ENCODE measurements at regions of chr2 and their contacts with region 1.

Region 1: GRCh38 chr2:64839844-64840243 is 149.4 kb upstream of the SLC1A4 start:
- DNase-seq: no peak
- ATAC-seq: no peak
- H3K4me3 ChIP-seq: no peak overlapping the region
- H3K27ac ChIP-seq: peak overlapping the region; percentile 86; the same call in 1 of the 2 replicates
- H3K4me1 ChIP-seq: peaks cover 57% of the 10 kb centered on the region
- H3K27me3 ChIP-seq: no peaks in the 10 kb centered on the region
- CTCF ChIP-seq: no peak

Region 2: GRCh38 chr2:64128943-64129391 is 710.9 kb before region 1 on chr2:
- CTCF ChIA-PET with region 1: no interaction called
- POLR2A ChIA-PET with region 1: interaction called, 14 read pairs
- intact Hi-C with region 1: no loop called
- DNase-seq: no peak
- ATAC-seq: no peak
- H3K4me3 ChIP-seq: no peak overlapping the region
- H3K27ac ChIP-seq: no peak overlapping the region
- H3K4me1 ChIP-seq: peaks cover 9% of the 10 kb centered on the region
- H3K27me3 ChIP-seq: no peaks in the 10 kb centered on the region
- CTCF ChIP-seq: no peak

Region 3: GRCh38 chr2:64474121-64474571 is 365.7 kb before region 1 on chr2:
- CTCF ChIA-PET with region 1: no interaction called
- POLR2A ChIA-PET with region 1: no interaction called
- intact Hi-C with region 1: no loop called
- DNase-seq: no peak
- ATAC-seq: no peak
- H3K4me3 ChIP-seq: no peak overlapping the region
- H3K27ac ChIP-seq: no peak overlapping the region
- H3K4me1 ChIP-seq: peaks cover 6% of the 10 kb centered on the region; the same call in 1 of the 2 replicates
- H3K27me3 ChIP-seq: no peaks in the 10 kb centered on the region
- CTCF ChIP-seq: no peak

Region 4: DNA sequence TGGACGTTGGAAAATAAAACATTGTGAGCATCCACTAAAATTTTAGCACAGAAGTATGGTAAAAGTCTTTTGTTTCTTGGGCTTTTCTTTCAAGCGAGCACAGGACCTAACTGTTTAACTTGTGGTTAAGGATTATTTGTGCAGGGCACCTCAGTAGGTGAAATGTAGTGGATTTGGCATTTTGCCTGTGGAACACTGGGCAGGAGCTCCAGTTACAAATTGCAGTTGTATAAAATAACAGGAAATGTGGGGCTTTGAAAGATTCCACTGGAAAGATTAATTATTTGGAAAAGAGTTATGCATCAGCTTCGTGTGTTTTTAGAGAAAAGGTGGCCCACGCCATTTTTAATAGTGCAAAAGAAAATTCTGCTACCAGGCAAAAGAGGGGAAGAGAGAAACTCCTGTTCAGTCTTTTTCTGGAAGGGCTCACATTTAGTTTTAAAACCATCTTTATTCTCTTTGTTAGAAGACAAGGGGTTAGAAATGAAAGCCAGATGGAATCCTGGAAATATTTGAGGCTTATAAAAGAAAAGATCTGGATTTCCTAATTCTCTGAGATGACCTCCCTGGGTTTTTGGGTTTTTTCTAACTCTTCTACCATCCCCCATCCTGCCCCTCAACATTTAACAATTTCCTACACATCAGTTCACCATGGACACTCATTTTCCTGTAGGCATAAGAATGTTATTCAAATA is 41.8 kb before region 1 on chr2:
- CTCF ChIA-PET with region 1: no interaction called
- POLR2A ChIA-PET with region 1: interaction called, 26 read pairs
- intact Hi-C with region 1: no loop called
- DNase-seq: peak; percentile 97
- ATAC-seq: peak; percentile 77
- H3K4me3 ChIP-seq: peak overlapping the region; percentile 13; the same call in 1 of the 2 replicates
- H3K27ac ChIP-seq: peak overlapping the region; percentile 74
- H3K4me1 ChIP-seq: peaks cover 58% of the 10 kb centered on the region
- H3K27me3 ChIP-seq: no peaks in the 10 kb centered on the region
- CTCF ChIP-seq: no peak

Region 5: GRCh38 chr2:64859312-64860212 is 19.7 kb after region 1 on chr2:
- CTCF ChIA-PET with region 1: interaction called, 6 read pairs
- POLR2A ChIA-PET with region 1: interaction called, 3 read pairs
- intact Hi-C with region 1: loop called (anchors 1 kb)
- DNase-seq: peak; percentile 86
- ATAC-seq: peak; percentile 81
- H3K4me3 ChIP-seq: peak overlapping the region; percentile 54
- H3K27ac ChIP-seq: peak overlapping the region; percentile 75
- H3K4me1 ChIP-seq: peaks cover 29% of the 10 kb centered on the region
- H3K27me3 ChIP-seq: no peaks in the 10 kb centered on the region
- CTCF ChIP-seq: 0 out of 2 replicates have a peak, but pooled peaks have one; percentile 22